ENCODE measurements at regions of chr14 and their contacts with region 1.

Region 1: GRCh38 chr14:68248481-68249255 is 429.1 kb downstream of the RAD51B start:
- DNase-seq: peak; percentile 49 to 79
- ATAC-seq: peak; percentile 87 to 92 (median 88)
- H3K4me3 ChIP-seq: no peak overlapping the region
- H3K27ac ChIP-seq: peak overlapping the region; percentile 89
- H3K4me1 ChIP-seq: peaks cover 75% of the 10 kb centered on the region
- H3K27me3 ChIP-seq: no peaks in the 10 kb centered on the region
- CTCF ChIP-seq: peak; percentile 69

Region 2: DNA sequence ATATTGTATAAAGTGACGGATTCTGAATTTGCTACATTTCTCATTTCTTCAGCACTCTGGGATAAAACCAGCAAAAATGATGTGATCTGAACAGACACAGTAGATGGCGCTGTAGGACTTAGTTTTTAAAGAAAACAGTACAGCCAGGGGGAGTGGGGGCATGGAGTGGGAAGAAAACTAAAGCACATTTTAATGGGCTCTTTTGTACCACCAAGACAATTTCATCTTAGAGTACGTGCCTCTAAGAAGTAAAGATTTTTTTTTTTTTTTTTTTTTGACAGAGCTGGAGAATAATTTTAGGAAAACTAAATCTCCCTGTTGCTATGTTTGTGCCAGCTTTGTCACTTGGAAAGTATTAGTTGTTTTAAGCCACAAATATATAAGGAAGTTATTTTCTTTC is 304.7 kb before region 1 on chr14:
- intact Hi-C with region 1: loop called (anchors 5 kb)
- DNase-seq: no peak
- ATAC-seq: peak; percentile 78 to 89 (median 84)
- H3K4me3 ChIP-seq: no peak overlapping the region
- H3K27ac ChIP-seq: no peak overlapping the region
- H3K4me1 ChIP-seq: peaks cover 41% of the 10 kb centered on the region
- H3K27me3 ChIP-seq: no peaks in the 10 kb centered on the region
- CTCF ChIP-seq: peak; percentile 75

Region 3: DNA sequence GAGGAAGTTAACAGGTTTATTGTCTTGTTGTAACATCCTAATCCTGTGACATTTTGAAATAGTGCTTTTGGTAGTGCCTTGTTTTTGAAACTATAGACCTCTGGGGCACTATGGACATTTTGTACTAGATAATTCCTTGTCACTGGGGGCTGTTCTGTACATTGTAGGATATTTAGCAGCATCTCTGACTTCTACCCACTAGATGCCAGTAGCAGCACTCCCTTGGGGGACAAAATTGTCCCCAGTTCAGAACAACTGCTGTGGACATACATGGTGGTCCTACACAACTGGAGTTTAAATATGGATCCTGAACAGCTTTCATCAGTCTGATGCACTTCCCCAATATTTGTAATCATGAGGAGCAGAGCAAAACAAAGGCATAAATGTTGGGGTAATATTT is 164.4 kb before region 1 on chr14:
- intact Hi-C with region 1: loop called in 1 of 2 experiments (anchors 10 kb)
- DNase-seq: no peak
- ATAC-seq: peak in 2 of 4 donors; percentile 55 to 63
- H3K4me3 ChIP-seq: no peak overlapping the region
- H3K27ac ChIP-seq: no peak overlapping the region
- H3K4me1 ChIP-seq: peaks cover 9% of the 10 kb centered on the region
- H3K27me3 ChIP-seq: no peaks in the 10 kb centered on the region
- CTCF ChIP-seq: peak; percentile 20

Region 4: DNA sequence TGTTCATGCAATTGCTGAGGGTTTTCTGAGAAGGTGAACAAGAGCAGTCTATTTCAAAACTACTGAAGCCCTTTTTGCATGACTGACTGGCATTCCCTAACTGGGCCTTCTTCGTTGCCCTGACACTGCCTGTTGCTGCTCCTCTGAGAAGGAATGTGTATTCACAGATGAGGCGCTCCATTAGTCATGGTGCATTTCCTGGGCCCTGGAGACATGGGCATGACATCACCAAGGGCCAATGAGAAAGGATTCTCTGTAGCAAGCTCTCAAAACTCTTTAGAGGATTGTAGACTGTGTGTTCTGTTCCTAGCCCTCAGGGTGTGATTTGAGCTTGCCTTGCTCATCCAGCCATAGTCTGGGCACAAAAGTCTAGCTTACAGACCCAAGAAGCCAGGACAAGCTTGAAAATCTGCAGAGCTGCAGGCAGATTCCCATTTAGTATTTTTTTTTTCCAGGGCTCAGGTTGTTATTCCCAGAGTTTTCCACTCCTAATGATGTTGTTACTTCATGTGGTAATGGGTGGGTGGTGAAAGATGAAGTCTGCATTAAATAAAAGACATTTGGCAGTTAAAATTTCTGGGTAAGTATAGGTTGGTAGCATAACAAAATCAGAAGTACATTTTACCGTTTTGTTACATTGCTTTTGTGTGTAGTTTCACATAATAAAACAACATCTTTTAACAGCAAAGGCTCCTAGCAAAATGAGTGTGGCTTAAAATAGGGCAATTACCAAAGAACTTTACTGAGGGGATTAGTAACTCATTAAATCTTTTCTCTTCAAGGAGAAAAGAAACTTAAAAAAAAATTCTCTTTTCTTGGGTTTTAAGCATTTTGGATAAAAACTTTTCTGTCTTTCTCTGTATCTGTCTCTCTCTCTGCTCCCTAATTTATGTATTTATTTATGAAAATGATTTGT is 110.7 kb before region 1 on chr14:
- intact Hi-C with region 1: loop called in 1 of 2 experiments (anchors 5 kb)
- DNase-seq: peak; percentile 60 to 69
- ATAC-seq: peak; percentile 85 to 95 (median 90)
- H3K4me3 ChIP-seq: no peak overlapping the region
- H3K27ac ChIP-seq: peak overlapping the region; percentile 81
- H3K4me1 ChIP-seq: peaks cover 50% of the 10 kb centered on the region
- H3K27me3 ChIP-seq: no peaks in the 10 kb centered on the region
- CTCF ChIP-seq: no peak

Region 5: GRCh38 chr14:68191567-68192321 is 56.9 kb before region 1 on chr14:
- intact Hi-C with region 1: loop called in 1 of 2 experiments (anchors 5 kb)
- DNase-seq: no peak
- ATAC-seq: peak; percentile 85 to 94 (median 94)
- H3K4me3 ChIP-seq: no peak overlapping the region
- H3K27ac ChIP-seq: peak overlapping the region; percentile 84
- H3K4me1 ChIP-seq: peaks cover 44% of the 10 kb centered on the region
- H3K27me3 ChIP-seq: no peaks in the 10 kb centered on the region
- CTCF ChIP-seq: no peak

Region 6: GRCh38 chr14:68548194-68549056 is 299.8 kb after region 1 on chr14:
- intact Hi-C with region 1: loop called (anchors 1 to 10 kb)
- DNase-seq: peak; percentile 90 to 93
- ATAC-seq: peak; percentile 74 to 88 (median 78)
- H3K4me3 ChIP-seq: no peak overlapping the region
- H3K27ac ChIP-seq: peak overlapping the region; percentile 96
- H3K4me1 ChIP-seq: peaks cover 81% of the 10 kb centered on the region
- H3K27me3 ChIP-seq: no peaks in the 10 kb centered on the region
- CTCF ChIP-seq: no peak

Region 7: GRCh38 chr14:68795597-68796417 is 547.1 kb after region 1 on chr14:
- intact Hi-C with region 1: loop called (anchors 2 to 5 kb)
- DNase-seq: peak; percentile 85 to 93
- ATAC-seq: peak; percentile 59 to 64 (median 62)
- H3K4me3 ChIP-seq: peak overlapping the region; percentile 91
- H3K27ac ChIP-seq: peak overlapping the region; percentile 100
- H3K4me1 ChIP-seq: no peaks in the 10 kb centered on the region
- H3K27me3 ChIP-seq: no peaks in the 10 kb centered on the region
- CTCF ChIP-seq: peak; percentile 80